ENCODE measurements at regions of chrX and their contacts with region 1.

Region 1: DNA sequence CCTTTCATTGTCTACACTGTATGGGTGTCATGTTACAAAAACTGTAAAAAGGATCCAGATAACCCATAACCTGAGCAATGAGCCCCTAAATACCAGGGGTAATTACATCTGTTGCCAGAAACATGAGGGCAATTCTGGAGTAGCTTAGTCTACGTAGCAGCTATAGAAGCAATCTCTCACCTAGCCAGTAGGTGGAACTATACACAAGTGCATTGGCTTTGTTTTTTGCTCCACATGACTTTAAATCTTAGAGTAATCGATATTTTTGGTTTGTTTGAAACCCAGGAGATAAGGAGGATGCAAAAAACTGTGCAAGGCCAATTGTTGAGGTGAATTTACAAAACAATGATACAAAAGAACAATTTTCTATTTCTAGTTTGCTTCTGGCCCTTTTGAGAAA is 57.5 kb downstream of the GPR82 start:
- DNase-seq: peak; percentile 45
- H3K4me3 ChIP-seq: no peak overlapping the region
- H3K27ac ChIP-seq: no peak overlapping the region
- H3K4me1 ChIP-seq: peaks cover 4% of the 10 kb centered on the region
- H3K27me3 ChIP-seq: no peaks in the 10 kb centered on the region
- CTCF ChIP-seq: peak; percentile 78

Region 2: GRCh38 chrX:41946235-41946634 is 164.7 kb after region 1 on chrX:
- CTCF ChIA-PET with region 1: no interaction called
- POLR2A ChIA-PET with region 1: no interaction called
- intact Hi-C with region 1: no loop called
- DNase-seq: no peak
- H3K4me3 ChIP-seq: no peak overlapping the region
- H3K27ac ChIP-seq: no peak overlapping the region
- H3K4me1 ChIP-seq: no peaks in the 10 kb centered on the region
- H3K27me3 ChIP-seq: no peaks in the 10 kb centered on the region
- CTCF ChIP-seq: no peak

Region 3: GRCh38 chrX:42020225-42020624 is 238.7 kb after region 1 on chrX:
- CTCF ChIA-PET with region 1: no interaction called
- POLR2A ChIA-PET with region 1: no interaction called
- intact Hi-C with region 1: no loop called
- DNase-seq: peak; percentile 14
- H3K4me3 ChIP-seq: no peak overlapping the region
- H3K27ac ChIP-seq: no peak overlapping the region
- H3K4me1 ChIP-seq: no peaks in the 10 kb centered on the region
- H3K27me3 ChIP-seq: no peaks in the 10 kb centered on the region
- CTCF ChIP-seq: no peak

Region 4: DNA sequence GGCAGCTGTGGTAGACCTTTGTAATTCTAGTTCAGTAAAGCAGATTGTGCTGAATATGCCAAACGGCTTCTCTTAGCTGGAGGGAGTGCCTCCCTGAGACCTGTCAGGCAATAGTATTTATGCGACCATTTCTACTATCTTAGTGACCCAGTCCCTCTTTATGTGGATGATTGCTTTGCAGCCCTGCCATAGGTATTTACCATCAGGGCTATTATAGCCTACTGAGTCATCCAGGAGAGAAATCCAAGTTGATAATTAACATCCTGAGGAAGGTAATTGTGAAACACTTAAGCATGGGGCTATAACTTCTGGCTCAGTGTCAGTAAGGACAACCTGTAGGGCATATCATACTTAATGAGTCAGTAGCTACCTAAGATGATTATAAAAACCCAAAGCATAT is 1770.7 kb after region 1 on chrX:
- CTCF ChIA-PET with region 1: interaction called, 8 read pairs
- POLR2A ChIA-PET with region 1: no interaction called
- intact Hi-C with region 1: loop called (anchors 5 kb)
- DNase-seq: no peak
- H3K4me3 ChIP-seq: peak overlapping the region; percentile 19
- H3K27ac ChIP-seq: peak overlapping the region; percentile 71
- H3K4me1 ChIP-seq: peaks cover 22% of the 10 kb centered on the region
- H3K27me3 ChIP-seq: no peaks in the 10 kb centered on the region
- CTCF ChIP-seq: no peak

Region 5: DNA sequence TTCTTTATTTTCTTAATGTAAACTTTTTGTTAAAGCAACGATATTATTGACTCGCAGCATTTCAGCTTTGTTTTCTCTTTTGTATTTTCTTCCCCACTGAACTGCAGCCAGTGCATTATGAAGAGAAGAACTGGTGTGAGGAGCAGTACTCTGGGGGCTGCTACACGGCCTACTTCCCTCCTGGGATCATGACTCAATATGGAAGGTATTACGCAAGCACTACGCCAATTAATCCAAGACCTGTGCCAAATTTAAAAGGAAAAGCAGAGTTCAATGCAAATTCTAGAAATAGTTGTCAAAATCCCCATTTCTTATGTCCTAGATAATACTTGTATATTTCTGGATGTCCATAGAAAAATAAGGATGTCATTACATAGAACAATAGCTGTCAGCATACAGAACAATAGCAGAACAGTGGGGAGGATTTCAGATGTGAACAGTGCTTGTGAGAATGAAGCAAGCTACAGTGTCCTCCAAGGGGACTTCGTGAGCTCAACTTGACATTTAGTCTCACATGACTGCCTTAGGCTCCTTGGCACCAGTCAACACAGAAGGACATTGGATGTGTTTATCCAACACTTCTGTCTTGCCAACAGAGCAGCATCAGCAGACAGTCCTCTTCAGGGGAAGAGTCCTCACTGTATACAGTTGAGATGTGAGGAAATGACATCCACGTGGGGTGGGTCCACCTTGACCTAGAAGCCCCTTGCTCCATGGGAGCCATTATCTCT is 1960.5 kb after region 1 on chrX:
- CTCF ChIA-PET with region 1: no interaction called
- POLR2A ChIA-PET with region 1: no interaction called
- intact Hi-C with region 1: loop called (anchors 10 kb)
- DNase-seq: peak; percentile 45
- H3K4me3 ChIP-seq: no peak overlapping the region
- H3K27ac ChIP-seq: no peak overlapping the region
- H3K4me1 ChIP-seq: no peaks in the 10 kb centered on the region
- H3K27me3 ChIP-seq: no peaks in the 10 kb centered on the region
- CTCF ChIP-seq: no peak

Measured in A673 (cell line).